Right cardiac atrium (tissue), 5 donors: ENCODE measurements at regions of chr12 and their contacts with region 1.

Region 1: GRCh38 chr12:116071555-116072230 is 205.8 kb downstream of the MED13L start:
- DNase-seq: no peak
- ATAC-seq: no peak
- H3K4me3 ChIP-seq: no peak overlapping the region
- H3K27ac ChIP-seq: no peak overlapping the region
- H3K4me1 ChIP-seq: peaks cover 4% of the 10 kb centered on the region
- H3K27me3 ChIP-seq: no peaks in the 10 kb centered on the region

Region 2: GRCh38 chr12:115973968-115974724 is 97.5 kb before region 1 on chr12:
- intact Hi-C with region 1: no loop called
- DNase-seq: no peak
- ATAC-seq: no peak
- H3K4me3 ChIP-seq: no peak overlapping the region
- H3K27ac ChIP-seq: no peak overlapping the region
- H3K4me1 ChIP-seq: peaks cover 2% of the 10 kb centered on the region
- H3K27me3 ChIP-seq: no peaks in the 10 kb centered on the region

Region 3: DNA sequence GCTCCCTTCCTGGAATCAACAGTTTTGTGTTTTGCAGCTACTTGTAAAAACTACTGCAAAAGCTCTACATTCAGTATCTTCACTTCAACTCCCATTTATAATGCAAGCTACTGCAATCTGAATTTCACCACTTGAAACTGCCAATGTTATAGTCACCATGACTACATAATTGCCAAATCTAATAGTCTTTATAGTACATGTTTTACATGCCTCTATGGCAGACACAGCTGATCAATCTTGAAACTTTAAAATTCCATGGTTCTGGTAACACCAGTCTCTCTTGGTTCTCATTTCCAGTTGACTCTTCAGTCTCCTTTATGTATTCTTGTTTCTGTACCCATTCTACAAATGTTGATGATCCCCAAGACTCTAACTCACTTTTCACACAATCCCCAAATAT is 19.9 kb after region 1 on chr12:
- intact Hi-C with region 1: loop called in 1 of 4 experiments (anchors 2 kb)
- DNase-seq: no peak
- ATAC-seq: no peak
- H3K4me3 ChIP-seq: no peak overlapping the region
- H3K27ac ChIP-seq: no peak overlapping the region
- H3K4me1 ChIP-seq: peaks cover 6% of the 10 kb centered on the region
- H3K27me3 ChIP-seq: no peaks in the 10 kb centered on the region